GM10248 (cell line): ENCODE measurements at regions of chr22 and their contacts with region 1.

Region 1: GRCh38 chr22:46798366-46799350 is 36.2 kb downstream of the TBC1D22A start:
- DNase-seq: peak; percentile 83
- CTCF ChIP-seq: peak; percentile 95

Region 2: GRCh38 chr22:46563381-46564083 is 235.1 kb before region 1 on chr22:
- CTCF ChIA-PET with region 1: interaction called, 10 read pairs
- POLR2A ChIA-PET with region 1: no interaction called
- DNase-seq: peak; percentile 85
- CTCF ChIP-seq: peak; percentile 93

Region 3: DNA sequence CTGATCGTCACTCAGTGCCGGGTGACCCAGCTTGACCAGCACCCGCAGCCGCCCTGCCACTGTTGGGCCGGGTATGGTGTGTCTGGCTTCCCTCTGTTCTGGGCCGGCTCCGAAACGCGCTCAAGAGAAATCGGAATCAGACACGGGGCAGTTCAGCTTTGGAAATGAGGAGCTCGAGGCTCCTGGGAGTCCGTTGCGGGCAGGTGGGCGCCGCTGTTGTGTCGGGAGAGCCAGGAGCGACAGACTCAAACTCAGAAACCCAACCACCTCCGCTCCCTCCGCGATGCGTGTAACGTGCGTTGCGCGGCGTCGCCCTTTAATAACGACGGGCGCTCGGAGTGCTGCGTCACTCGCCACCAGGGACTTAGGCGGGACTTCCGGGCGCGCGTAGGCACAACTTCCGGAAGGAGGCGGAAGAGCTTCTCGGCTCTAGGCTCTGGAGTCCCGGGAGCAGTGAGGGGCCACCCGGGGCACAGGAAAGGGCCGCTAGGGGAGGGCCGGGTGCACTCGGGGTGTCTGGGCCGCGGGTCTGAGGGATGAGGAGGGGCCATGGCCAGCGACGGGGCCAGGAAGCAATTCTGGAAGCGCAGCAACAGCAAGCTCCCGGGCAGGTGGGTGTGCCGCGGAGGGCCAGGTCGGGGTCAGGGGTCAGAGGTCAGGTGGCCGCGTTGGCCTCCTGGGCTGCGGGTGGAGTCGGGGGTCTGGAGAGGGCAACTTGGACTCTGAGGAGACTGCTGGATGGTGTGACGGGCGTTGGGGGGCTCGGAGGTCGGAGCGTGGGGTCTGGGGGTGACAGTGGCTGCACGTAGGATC is 36.2 kb before region 1 on chr22 and contains the start of gene TBC1D22A:
- CTCF ChIA-PET with region 1: interaction called, 138 read pairs
- POLR2A ChIA-PET with region 1: no interaction called
- DNase-seq: peak; percentile 95
- CTCF ChIP-seq: no peak

Region 4: DNA sequence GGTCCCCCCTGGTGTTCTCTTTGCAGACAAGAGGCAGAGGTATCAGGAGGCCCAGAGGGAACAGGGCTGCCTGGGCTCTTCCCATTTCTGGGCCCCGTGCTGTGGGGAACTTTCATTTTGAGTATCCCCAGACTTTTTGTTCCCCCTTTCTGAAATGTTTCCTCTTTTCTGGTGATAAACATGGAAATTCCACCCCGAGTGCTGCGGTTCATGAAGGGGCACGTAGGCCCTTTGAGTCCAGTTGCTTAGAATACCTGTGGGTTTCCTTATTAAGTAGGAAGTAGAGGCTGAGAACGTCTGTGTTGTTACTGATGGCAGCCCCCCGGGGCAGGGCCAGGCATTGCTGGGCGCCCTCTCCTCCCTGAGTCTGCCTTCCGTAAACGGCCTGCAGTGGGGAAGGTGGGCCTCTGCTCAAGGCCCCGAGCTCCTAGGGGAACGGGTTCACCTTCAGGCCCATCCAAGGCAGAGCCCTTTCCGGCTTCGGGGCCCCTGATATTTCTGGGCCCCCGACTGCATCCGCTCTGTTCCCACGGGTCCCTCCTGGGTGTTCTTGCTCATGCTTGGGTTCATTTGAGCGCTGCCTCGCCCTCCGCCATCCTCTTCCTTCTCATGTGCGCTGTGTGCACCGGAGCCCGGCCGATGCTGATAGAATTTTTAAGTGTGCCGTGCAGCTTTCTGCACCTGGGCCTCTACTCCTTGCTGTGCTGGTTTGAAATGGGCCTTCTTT is 24.2 kb before region 1 on chr22:
- CTCF ChIA-PET with region 1: interaction called, 39 read pairs
- POLR2A ChIA-PET with region 1: no interaction called
- DNase-seq: peak; percentile 66
- CTCF ChIP-seq: no peak

Region 5: GRCh38 chr22:46815896-46816731 is 17.5 kb after region 1 on chr22:
- CTCF ChIA-PET with region 1: interaction called, 40 read pairs
- POLR2A ChIA-PET with region 1: no interaction called
- DNase-seq: no peak
- CTCF ChIP-seq: no peak

Region 6: DNA sequence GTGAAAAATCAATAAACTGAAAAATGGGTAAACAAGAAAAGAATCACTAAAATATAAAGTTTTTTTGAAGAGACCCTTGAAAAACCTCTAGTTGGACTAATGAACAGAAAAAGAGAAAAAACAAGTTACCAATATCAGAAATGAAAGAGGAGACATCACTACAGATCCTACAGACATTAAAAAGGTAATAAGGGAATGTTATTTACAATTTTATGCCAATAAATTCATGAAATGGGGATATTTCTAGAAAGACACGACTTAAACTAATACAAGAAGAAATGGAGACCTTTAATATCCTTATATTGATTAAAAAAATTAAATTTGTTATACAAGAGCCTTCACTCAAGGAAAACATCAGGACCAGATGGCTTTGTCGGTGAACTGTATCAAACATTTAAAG is 73.2 kb after region 1 on chr22:
- CTCF ChIA-PET with region 1: no interaction called
- POLR2A ChIA-PET with region 1: no interaction called
- DNase-seq: no peak
- CTCF ChIP-seq: no peak